AG04449 (cell line): ENCODE measurements at regions of chr20 and their contacts with region 1.

Region 1: GRCh38 chr20:47150403-47151152 is 205.9 kb downstream of the ZMYND8 start:
- DNase-seq: no peak
- H3K4me3 ChIP-seq: no peak overlapping the region
- CTCF ChIP-seq: peak; percentile 83

Region 2: DNA sequence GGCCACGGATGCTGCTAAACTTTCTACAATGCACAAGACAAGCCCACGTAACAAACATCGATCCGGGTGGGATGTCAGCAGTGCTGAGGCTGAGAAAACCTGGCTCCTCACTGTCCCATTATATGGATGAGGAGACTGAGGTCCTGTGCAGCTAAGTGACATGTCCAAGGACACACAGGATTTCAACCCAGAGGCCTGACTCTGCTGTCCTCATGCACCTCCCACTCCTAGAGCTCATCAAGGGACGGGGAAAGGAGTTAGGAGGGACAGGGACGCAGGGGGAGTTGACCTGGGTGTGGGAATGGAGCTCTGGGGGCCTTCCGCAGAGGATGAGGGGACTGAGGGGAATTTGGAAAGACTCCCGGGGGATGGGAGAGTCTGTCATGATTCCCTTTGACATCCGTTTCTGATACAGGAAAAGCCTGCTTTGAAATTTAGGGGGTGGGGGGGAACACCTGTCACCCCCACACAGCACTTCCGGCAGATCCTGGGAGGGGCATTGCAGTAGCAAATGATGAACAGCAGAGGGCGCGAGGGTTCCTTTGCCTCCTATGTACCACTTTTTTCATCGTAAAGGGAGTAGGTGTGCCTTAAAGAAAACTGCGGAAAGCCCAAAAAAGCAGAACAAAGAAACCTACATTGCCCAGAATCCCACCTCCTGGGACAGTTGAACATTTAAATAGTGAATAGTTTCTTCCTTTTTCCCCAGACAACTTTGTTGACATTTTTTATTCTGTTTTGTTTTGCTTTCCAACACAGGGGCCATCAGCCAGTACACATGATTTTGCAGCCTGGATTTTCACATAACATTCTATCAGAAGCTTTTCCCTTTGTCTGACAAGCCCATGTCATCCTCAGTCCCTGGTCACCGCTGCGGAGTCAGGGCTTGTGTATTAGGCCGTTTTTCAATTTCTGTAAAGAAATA is 392.6 kb before region 1 on chr20:
- CTCF ChIA-PET with region 1: interaction called, 109 read pairs
- POLR2A ChIA-PET with region 1: no interaction called
- DNase-seq: no peak
- H3K4me3 ChIP-seq: no peak overlapping the region
- CTCF ChIP-seq: peak; percentile 93

Region 3: DNA sequence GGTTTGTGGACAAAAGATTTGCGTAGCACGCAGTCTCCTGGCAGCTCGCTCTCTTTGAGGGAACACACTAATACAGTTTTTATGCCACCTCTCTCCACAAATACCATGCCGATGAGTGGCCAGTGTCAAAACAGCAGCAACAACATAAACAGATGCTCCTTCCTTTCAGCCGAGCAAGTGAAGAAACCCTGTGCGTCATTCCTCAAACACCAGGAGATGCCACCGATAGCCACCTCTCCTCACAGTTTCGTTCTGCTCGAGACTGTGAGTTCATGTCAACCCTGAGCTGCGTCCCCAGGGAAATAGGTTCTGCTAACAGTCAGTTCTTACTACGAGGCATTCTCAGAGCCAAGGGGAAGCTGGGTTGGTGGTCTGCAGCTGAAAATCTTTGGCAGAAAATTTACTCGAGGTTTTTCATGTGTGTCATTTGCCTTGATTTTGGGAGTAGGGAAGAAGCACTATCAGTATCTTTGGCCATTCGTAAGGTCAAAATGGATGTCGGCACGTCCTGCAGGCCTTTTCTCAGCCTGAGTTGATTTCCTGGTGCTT is 196.0 kb before region 1 on chr20:
- CTCF ChIA-PET with region 1: no interaction called
- POLR2A ChIA-PET with region 1: no interaction called
- DNase-seq: peak; percentile 94
- H3K4me3 ChIP-seq: peak overlapping the region; percentile 35
- CTCF ChIP-seq: no peak

Region 4: GRCh38 chr20:47139857-47140535 is 10.6 kb before region 1 on chr20:
- CTCF ChIA-PET with region 1: interaction called, 18 read pairs
- POLR2A ChIA-PET with region 1: no interaction called
- DNase-seq: no peak
- H3K4me3 ChIP-seq: no peak overlapping the region
- CTCF ChIP-seq: no peak

Region 5: GRCh38 chr20:47205577-47206498 is 55.3 kb after region 1 on chr20:
- CTCF ChIA-PET with region 1: no interaction called
- POLR2A ChIA-PET with region 1: no interaction called
- DNase-seq: no peak
- H3K4me3 ChIP-seq: no peak overlapping the region
- CTCF ChIP-seq: peak; percentile 74

Region 6: GRCh38 chr20:47355489-47356219 is 205.1 kb after region 1 on chr20:
- CTCF ChIA-PET with region 1: no interaction called
- POLR2A ChIA-PET with region 1: no interaction called
- DNase-seq: no peak
- H3K4me3 ChIP-seq: peak overlapping the region; percentile 52
- CTCF ChIP-seq: no peak

Region 7: DNA sequence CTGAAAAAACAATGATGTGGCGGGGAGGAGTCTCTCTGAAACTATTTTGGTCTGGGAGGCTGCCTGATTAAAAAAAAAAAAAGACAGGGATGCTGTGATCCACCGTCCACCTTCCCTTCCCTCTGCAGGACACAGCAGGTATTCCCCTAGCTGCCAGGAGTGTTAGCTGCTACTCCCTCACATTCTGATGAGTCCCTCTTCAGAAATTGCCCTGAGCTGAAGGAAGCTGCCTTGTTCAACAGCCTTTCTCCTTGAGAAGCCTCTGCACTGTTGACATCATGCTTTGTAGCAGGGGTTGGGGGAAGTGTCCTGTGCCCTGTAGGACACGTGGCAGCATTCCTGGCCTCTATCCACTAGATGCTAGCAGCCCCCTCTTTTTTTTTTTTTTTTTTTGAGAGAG is 277.6 kb after region 1 on chr20:
- CTCF ChIA-PET with region 1: no interaction called
- POLR2A ChIA-PET with region 1: no interaction called
- DNase-seq: no peak
- H3K4me3 ChIP-seq: no peak overlapping the region
- CTCF ChIP-seq: no peak